Natural killer cell (primary cell): ENCODE measurements at regions of chr18 and their contacts with region 1.

Region 1: DNA sequence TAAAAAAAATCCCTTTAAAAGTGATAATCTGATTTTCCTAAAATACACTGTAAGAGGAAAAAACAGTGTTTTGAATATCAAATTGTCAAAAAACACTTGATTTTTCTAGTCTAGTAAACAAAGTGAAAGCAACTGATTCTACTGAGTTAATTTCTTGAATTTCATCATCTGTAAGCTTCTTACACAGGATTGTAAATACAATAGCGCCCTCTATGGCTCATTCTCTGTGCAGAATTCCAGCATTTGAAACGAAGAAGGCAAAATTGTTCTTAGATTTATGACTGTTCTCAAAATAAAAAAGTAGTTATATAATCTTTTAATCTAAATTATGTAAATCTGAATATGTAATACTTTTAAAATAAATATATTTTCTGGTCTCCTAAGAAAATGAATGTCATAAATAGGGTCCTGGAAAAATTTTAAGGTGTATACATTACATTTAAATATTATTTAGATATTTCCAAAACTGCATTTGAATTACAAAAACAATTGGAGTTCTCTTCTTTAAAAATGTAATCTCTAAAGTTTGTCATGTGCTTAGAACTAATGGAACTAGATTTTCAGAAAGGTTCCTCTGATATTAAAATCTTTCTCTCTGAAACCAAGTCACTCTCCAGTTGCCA is 176.9 kb upstream of the MC4R start:
- DNase-seq: peak in 1 of 2 donors; percentile 28
- ATAC-seq: no peak
- H3K4me3 ChIP-seq: no peak overlapping the region
- H3K4me3 Mint-ChIP-seq: no peak overlapping the region
- H3K27ac ChIP-seq: no peak overlapping the region
- H3K27ac Mint-ChIP-seq: no peak overlapping the region
- H3K4me1 ChIP-seq: no peaks in the 10 kb centered on the region
- H3K4me1 Mint-ChIP-seq: no peaks in the 10 kb centered on the region
- H3K27me3 ChIP-seq: no peaks in the 10 kb centered on the region
- H3K27me3 Mint-ChIP-seq: no peaks in the 10 kb centered on the region
- CTCF ChIP-seq: peak; percentile 45

Region 2: DNA sequence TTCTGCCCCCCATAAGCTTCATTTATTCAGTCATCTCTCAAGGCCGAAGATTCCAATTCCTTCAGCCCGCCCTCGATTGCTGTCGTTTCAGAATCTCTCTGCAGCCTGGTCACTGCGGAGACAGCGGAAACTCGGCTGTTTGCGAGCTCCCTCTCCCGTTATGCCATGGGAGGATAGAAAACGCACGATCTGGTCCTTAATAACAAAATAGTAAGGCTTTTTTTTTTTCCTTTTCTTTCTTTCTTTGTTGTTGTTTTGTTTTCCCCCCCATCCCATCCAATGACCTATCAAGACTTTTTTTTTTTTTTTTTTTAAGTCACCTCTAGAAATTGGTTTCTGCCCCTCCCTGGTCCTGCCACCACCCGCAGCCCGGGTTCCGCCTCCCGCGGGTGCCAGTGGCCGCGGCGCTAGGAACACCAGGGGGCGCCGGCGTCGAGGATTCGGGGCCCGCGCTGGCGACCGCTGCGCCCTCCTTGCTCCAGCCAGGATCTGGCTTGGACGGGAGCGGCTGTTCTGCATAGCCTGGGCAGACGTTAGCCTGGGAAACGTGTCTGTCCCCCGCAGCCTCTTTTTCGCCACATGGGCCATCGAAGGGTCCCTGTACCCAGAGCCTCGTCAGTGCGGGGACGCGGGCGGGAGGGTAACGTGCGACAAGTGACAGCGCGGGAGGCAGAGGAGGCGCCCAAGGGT is 1241.1 kb before region 1 on chr18:
- intact Hi-C with region 1: loop called (anchors 5 kb)
- DNase-seq: peak; percentile 40 to 73
- ATAC-seq: peak; percentile 66 to 91 (median 68)
- H3K4me3 ChIP-seq: no peak overlapping the region
- H3K4me3 Mint-ChIP-seq: peak overlapping the region; percentile 35
- H3K27ac ChIP-seq: no peak overlapping the region
- H3K27ac Mint-ChIP-seq: no peak overlapping the region
- H3K4me1 ChIP-seq: peaks cover 5% of the 10 kb centered on the region
- H3K4me1 Mint-ChIP-seq: no peaks in the 10 kb centered on the region
- H3K27me3 ChIP-seq: peaks cover 12% of the 10 kb centered on the region
- H3K27me3 Mint-ChIP-seq: peaks cover 20 to 49% of the 10 kb centered on the region in 2 donors
- CTCF ChIP-seq: peak; percentile 61